CD8-positive, alpha-beta T cell (primary cell): ENCODE measurements at regions of chr11 and their contacts with region 1.

Region 1: DNA sequence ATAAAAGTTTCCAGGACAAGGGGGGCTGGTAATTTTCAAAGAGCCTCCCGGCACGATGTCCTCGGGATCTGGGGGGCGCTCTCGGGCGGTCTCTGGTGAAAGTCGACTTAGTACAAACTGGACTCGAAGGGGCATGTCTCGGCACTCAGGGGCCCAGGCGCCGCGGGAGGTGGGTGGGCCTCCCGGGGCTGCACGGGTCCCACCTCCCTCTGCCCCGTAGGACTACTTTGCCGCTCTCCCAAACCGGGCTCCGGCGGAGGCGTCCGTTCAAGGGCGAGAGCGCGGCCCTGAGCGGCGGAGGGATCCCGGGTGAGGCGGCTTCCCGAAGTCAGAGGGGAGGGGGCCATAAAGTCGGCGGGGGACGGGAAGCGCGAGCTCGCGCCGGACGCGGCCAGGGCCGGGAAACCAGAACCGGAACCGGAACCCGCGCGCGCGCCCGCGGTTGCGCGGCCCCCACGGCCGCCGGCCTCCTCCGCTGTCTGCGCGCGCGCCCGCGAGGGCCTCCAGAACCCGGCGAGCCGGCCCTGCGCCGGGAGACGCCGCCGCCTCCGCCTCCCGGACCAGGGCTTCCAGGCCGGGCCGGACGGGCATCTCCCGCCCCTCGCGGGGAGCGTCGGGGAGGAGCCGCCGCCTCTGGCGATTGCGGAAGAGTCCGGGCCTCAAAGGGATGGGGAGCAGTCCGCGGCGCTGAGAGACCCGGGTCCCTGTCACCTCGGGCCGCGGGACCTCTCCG is at the start of gene ARHGEF12:
- DNase-seq: peak; percentile 27 to 91 (median 68)
- ATAC-seq: peak; percentile 37
- H3K4me3 ChIP-seq: peak within 1 kb of the TSS; percentile 68 to 74
- H3K4me3 Mint-ChIP-seq: peak within 1 kb of the TSS; percentile 90
- H3K27ac ChIP-seq: peak within 1 kb of the TSS in 1 of 2 experiments; percentile 41
- H3K27ac Mint-ChIP-seq: peak within 1 kb of the TSS; percentile 15
- H3K4me1 ChIP-seq: peaks cover 24% of the 10 kb centered on the region
- H3K4me1 Mint-ChIP-seq: peaks cover 33% of the 10 kb centered on the region
- H3K27me3 ChIP-seq: peaks cover 10 to 14% of the 10 kb centered on the region in 2 experiments
- H3K27me3 Mint-ChIP-seq: peaks cover 44% of the 10 kb centered on the region
- CTCF ChIP-seq: no peak
- total RNA-seq, gene ARHGEF12: 3.8 to 5.6 TPM

Region 2: GRCh38 chr11:119990309-119991021 is 345.6 kb before region 1 on chr11:
- CTCF ChIA-PET with region 1: no interaction called
- POLR2A ChIA-PET with region 1: no interaction called
- intact Hi-C with region 1: no loop called
- DNase-seq: no peak
- ATAC-seq: no peak
- H3K4me3 ChIP-seq: no peak overlapping the region
- H3K4me3 Mint-ChIP-seq: no peak overlapping the region
- H3K27ac ChIP-seq: no peak overlapping the region
- H3K27ac Mint-ChIP-seq: no peak overlapping the region
- H3K4me1 ChIP-seq: no peaks in the 10 kb centered on the region
- H3K4me1 Mint-ChIP-seq: no peaks in the 10 kb centered on the region
- H3K27me3 ChIP-seq: no peaks in the 10 kb centered on the region
- H3K27me3 Mint-ChIP-seq: peaks cover 30% of the 10 kb centered on the region
- CTCF ChIP-seq: no peak

Region 3: GRCh38 chr11:120235024-120235861 is 100.8 kb before region 1 on chr11:
- CTCF ChIA-PET with region 1: no interaction called
- POLR2A ChIA-PET with region 1: no interaction called
- intact Hi-C with region 1: no loop called
- DNase-seq: peak; percentile 13 to 68 (median 49)
- ATAC-seq: peak; percentile 55
- H3K4me3 ChIP-seq: no peak overlapping the region
- H3K4me3 Mint-ChIP-seq: no peak overlapping the region
- H3K27ac ChIP-seq: no peak overlapping the region
- H3K27ac Mint-ChIP-seq: no peak overlapping the region
- H3K4me1 ChIP-seq: no peaks in the 10 kb centered on the region
- H3K4me1 Mint-ChIP-seq: no peaks in the 10 kb centered on the region
- H3K27me3 ChIP-seq: peaks cover 2 to 8% of the 10 kb centered on the region in 2 experiments
- H3K27me3 Mint-ChIP-seq: peaks cover 35% of the 10 kb centered on the region
- CTCF ChIP-seq: peak; percentile 63

Region 4: DNA sequence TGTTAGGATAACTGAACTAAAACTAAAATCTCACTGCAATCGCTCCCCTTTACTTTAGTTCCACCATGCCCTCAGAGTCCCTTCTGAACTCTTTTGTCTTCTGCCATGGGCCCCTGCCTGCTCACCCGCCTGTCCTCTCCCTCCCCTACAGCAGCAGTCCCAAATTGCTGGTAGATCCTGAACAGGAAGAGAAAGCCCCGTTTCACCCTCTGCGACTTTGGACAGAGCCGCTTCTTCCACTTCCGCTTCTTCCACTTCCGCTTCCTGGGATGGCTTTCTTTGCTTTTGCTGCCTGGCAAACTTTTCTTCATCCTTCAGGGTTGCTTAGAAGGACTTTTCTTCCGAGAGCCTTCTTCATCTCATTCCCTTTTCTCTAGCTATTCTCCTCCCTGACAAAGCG is 46.6 kb before region 1 on chr11:
- CTCF ChIA-PET with region 1: no interaction called
- POLR2A ChIA-PET with region 1: no interaction called
- intact Hi-C with region 1: no loop called
- DNase-seq: no peak
- ATAC-seq: no peak
- H3K4me3 ChIP-seq: no peak overlapping the region
- H3K4me3 Mint-ChIP-seq: no peak overlapping the region
- H3K27ac ChIP-seq: no peak overlapping the region
- H3K27ac Mint-ChIP-seq: no peak overlapping the region
- H3K4me1 ChIP-seq: no peaks in the 10 kb centered on the region
- H3K4me1 Mint-ChIP-seq: no peaks in the 10 kb centered on the region
- H3K27me3 ChIP-seq: peaks cover 0 to 4% of the 10 kb centered on the region in 2 experiments
- H3K27me3 Mint-ChIP-seq: peaks cover 28% of the 10 kb centered on the region
- CTCF ChIP-seq: no peak

Region 5: DNA sequence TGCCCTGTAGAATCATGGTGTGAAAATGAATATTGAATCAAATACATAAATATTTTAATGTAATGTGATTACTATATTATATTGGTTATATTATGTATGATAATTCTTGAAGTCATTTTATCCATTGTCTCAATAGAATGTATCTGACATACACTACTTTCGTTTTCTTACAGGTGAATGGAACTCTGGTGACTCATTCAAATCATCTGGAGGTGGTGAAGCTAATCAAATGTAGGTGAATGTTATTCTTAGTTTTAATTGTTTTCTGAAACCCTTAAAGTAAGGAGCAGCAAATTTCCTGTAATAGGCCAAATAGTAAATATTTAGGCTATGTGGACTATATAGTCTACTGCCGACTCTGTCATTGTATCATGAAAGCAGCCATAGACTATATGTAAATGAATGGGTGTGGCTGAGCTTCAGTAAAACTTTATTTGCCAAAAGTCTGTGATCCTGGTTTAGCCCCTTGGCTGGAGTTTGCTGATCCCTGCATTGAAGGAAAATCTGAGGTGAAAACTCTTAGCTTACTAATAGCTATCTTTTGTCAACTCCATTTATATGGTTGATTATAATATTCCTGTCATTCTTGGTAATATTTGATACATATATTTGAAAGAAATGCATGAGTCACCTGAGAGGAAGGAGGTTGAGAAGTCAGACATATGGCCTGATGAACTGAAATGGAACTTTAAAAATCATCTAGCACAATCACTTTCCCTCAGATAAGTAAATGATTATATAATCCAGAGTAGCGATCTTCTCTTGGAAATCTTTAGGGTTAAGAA is 88.3 kb after region 1 on chr11:
- CTCF ChIA-PET with region 1: no interaction called
- POLR2A ChIA-PET with region 1: no interaction called
- intact Hi-C with region 1: loop called in 1 of 2 experiments (anchors 10 kb)
- DNase-seq: no peak
- ATAC-seq: no peak
- H3K4me3 ChIP-seq: no peak overlapping the region
- H3K4me3 Mint-ChIP-seq: no peak overlapping the region
- H3K27ac ChIP-seq: no peak overlapping the region
- H3K27ac Mint-ChIP-seq: no peak overlapping the region
- H3K4me1 ChIP-seq: no peaks in the 10 kb centered on the region
- H3K4me1 Mint-ChIP-seq: no peaks in the 10 kb centered on the region
- H3K27me3 ChIP-seq: no peaks in the 10 kb centered on the region
- H3K27me3 Mint-ChIP-seq: no peaks in the 10 kb centered on the region
- CTCF ChIP-seq: no peak

Region 6: GRCh38 chr11:120511116-120511819 is 175.2 kb after region 1 on chr11 and contains the start of gene GRIK4:
- CTCF ChIA-PET with region 1: interaction called, 6 read pairs
- POLR2A ChIA-PET with region 1: no interaction called
- intact Hi-C with region 1: loop called in 1 of 2 experiments (anchors 10 kb)
- DNase-seq: peak; percentile 47 to 81 (median 73)
- ATAC-seq: peak; percentile 73
- H3K4me3 ChIP-seq: no peak within 1 kb of the TSS
- H3K4me3 Mint-ChIP-seq: peak within 1 kb of the TSS; percentile 62
- H3K27ac ChIP-seq: no peak within 1 kb of the TSS
- H3K27ac Mint-ChIP-seq: no peak within 1 kb of the TSS
- H3K4me1 ChIP-seq: no peaks in the 10 kb centered on the region
- H3K4me1 Mint-ChIP-seq: peaks cover 5% of the 10 kb centered on the region
- H3K27me3 ChIP-seq: peaks cover 6% of the 10 kb centered on the region in 2 experiments
- H3K27me3 Mint-ChIP-seq: peaks cover 74% of the 10 kb centered on the region
- CTCF ChIP-seq: peak; percentile 71
- total RNA-seq, gene GRIK4: not detected

Region 7: GRCh38 chr11:120682866-120683265 is 346.8 kb after region 1 on chr11:
- CTCF ChIA-PET with region 1: interaction called, 90 read pairs
- POLR2A ChIA-PET with region 1: no interaction called
- intact Hi-C with region 1: loop called (anchors 1 kb)
- DNase-seq: no peak
- ATAC-seq: no peak
- H3K4me3 ChIP-seq: no peak overlapping the region
- H3K4me3 Mint-ChIP-seq: no peak overlapping the region
- H3K27ac ChIP-seq: no peak overlapping the region
- H3K27ac Mint-ChIP-seq: no peak overlapping the region
- H3K4me1 ChIP-seq: no peaks in the 10 kb centered on the region
- H3K4me1 Mint-ChIP-seq: no peaks in the 10 kb centered on the region
- H3K27me3 ChIP-seq: no peaks in the 10 kb centered on the region
- H3K27me3 Mint-ChIP-seq: peaks cover 25% of the 10 kb centered on the region
- CTCF ChIP-seq: no peak

Region 8: GRCh38 chr11:120801801-120802689 is 466.0 kb after region 1 on chr11:
- CTCF ChIA-PET with region 1: interaction called, 9 read pairs
- POLR2A ChIA-PET with region 1: no interaction called
- intact Hi-C with region 1: loop called in 1 of 2 experiments (anchors 2 kb)
- DNase-seq: peak in 7 of 9 experiments; percentile 8 to 58 (median 53)
- ATAC-seq: no peak
- H3K4me3 ChIP-seq: no peak overlapping the region
- H3K4me3 Mint-ChIP-seq: no peak overlapping the region
- H3K27ac ChIP-seq: no peak overlapping the region
- H3K27ac Mint-ChIP-seq: no peak overlapping the region
- H3K4me1 ChIP-seq: no peaks in the 10 kb centered on the region
- H3K4me1 Mint-ChIP-seq: no peaks in the 10 kb centered on the region
- H3K27me3 ChIP-seq: no peaks in the 10 kb centered on the region
- H3K27me3 Mint-ChIP-seq: peaks cover 17% of the 10 kb centered on the region
- CTCF ChIP-seq: peak; percentile 78

Region 9: GRCh38 chr11:120952461-120953434 is 616.7 kb after region 1 on chr11:
- CTCF ChIA-PET with region 1: no interaction called
- POLR2A ChIA-PET with region 1: no interaction called
- intact Hi-C with region 1: loop called (anchors 2 to 10 kb)
- DNase-seq: peak; percentile 25 to 75 (median 58)
- ATAC-seq: peak; percentile 56
- H3K4me3 ChIP-seq: peak overlapping the region in 1 of 2 experiments; percentile 39
- H3K4me3 Mint-ChIP-seq: peak overlapping the region; percentile 66
- H3K27ac ChIP-seq: no peak overlapping the region
- H3K27ac Mint-ChIP-seq: no peak overlapping the region
- H3K4me1 ChIP-seq: peaks cover 21% of the 10 kb centered on the region
- H3K4me1 Mint-ChIP-seq: peaks cover 16% of the 10 kb centered on the region
- H3K27me3 ChIP-seq: peaks cover 0 to 5% of the 10 kb centered on the region in 2 experiments
- H3K27me3 Mint-ChIP-seq: peaks cover 23% of the 10 kb centered on the region
- CTCF ChIP-seq: peak; percentile 34

Region 10: GRCh38 chr11:121194731-121195596 is 858.9 kb after region 1 on chr11:
- CTCF ChIA-PET with region 1: interaction called, 6 read pairs
- POLR2A ChIA-PET with region 1: no interaction called
- intact Hi-C with region 1: loop called in 1 of 2 experiments (anchors 1 kb)
- DNase-seq: peak in 8 of 9 experiments; percentile 30 to 76 (median 60)
- ATAC-seq: no peak
- H3K4me3 ChIP-seq: no peak overlapping the region
- H3K4me3 Mint-ChIP-seq: no peak overlapping the region
- H3K27ac ChIP-seq: no peak overlapping the region
- H3K27ac Mint-ChIP-seq: no peak overlapping the region
- H3K4me1 ChIP-seq: no peaks in the 10 kb centered on the region
- H3K4me1 Mint-ChIP-seq: peaks cover 6% of the 10 kb centered on the region
- H3K27me3 ChIP-seq: no peaks in the 10 kb centered on the region
- H3K27me3 Mint-ChIP-seq: peaks cover 33% of the 10 kb centered on the region
- CTCF ChIP-seq: peak; percentile 90